Thyroid gland (tissue), 4 donors: ENCODE measurements at regions of chr14 and their contacts with region 1.

Region 1: GRCh38 chr14:74954232-74954946 is 1.0 kb downstream of the PGF start:
- DNase-seq: peak; percentile 85 to 87
- H3K4me3 ChIP-seq: peak overlapping the region; percentile 3 to 75 (median 75)
- H3K27ac ChIP-seq: peak overlapping the region; percentile 57 to 90 (median 86)
- H3K4me1 ChIP-seq: peaks cover 34 to 65% of the 10 kb centered on the region in 2 donors
- H3K27me3 ChIP-seq: no peaks in the 10 kb centered on the region
- CTCF ChIP-seq: no peak
- POLR2A ChIP-seq: peak in 1 of 2 donors; percentile 69

Region 2: GRCh38 chr14:75009176-75009575 is 54.8 kb after region 1 on chr14:
- intact Hi-C with region 1: loop called (anchors 5 kb)
- DNase-seq: peak; percentile 94 to 95
- H3K4me3 ChIP-seq: no peak overlapping the region
- H3K27ac ChIP-seq: peak overlapping the region; percentile 61 to 89 (median 83)
- H3K4me1 ChIP-seq: peaks cover 65 to 81% of the 10 kb centered on the region in 2 donors
- H3K27me3 ChIP-seq: no peaks in the 10 kb centered on the region
- CTCF ChIP-seq: no peak
- POLR2A ChIP-seq: peak in 1 of 2 donors; percentile 35